ENCODE measurements at regions of chr1 and their contacts with region 1.

Region 1: GRCh38 chr1:156096640-156097391 is 14.6 kb upstream of the MEX3A start:
- DNase-seq: peak; percentile 77 to 98 (median 91)

Region 2: GRCh38 chr1:155063550-155064110 is 1033.2 kb before region 1 on chr1 and contains the start of gene EFNA4:
- intact Hi-C with region 1: no loop called
- DNase-seq: peak in 7 of 10 donors; percentile 53 to 93 (median 67)

Region 3: GRCh38 chr1:156129706-156130581 is 33.1 kb after region 1 on chr1:
- intact Hi-C with region 1: loop called (anchors 1 kb)
- DNase-seq: peak in 9 of 10 donors; percentile 58 to 95 (median 81)